Gastrocnemius medialis (tissue), 4 donors: ENCODE measurements at regions of chr11 and their contacts with region 1.

Region 1: GRCh38 chr11:60363542-60364510 is 14.5 kb upstream of the MS4A7 start:
- DNase-seq: peak; percentile 11 to 18
- ATAC-seq: peak in 1 of 2 donors; percentile 51
- H3K4me3 ChIP-seq: no peak overlapping the region
- H3K27ac ChIP-seq: no peak overlapping the region
- H3K4me1 ChIP-seq: no peaks in the 10 kb centered on the region
- H3K27me3 ChIP-seq: no peaks in the 10 kb centered on the region
- CTCF ChIP-seq: peak in 2 of 5 experiments; percentile 50 to 57
- POLR2A ChIP-seq: no peak

Region 2: DNA sequence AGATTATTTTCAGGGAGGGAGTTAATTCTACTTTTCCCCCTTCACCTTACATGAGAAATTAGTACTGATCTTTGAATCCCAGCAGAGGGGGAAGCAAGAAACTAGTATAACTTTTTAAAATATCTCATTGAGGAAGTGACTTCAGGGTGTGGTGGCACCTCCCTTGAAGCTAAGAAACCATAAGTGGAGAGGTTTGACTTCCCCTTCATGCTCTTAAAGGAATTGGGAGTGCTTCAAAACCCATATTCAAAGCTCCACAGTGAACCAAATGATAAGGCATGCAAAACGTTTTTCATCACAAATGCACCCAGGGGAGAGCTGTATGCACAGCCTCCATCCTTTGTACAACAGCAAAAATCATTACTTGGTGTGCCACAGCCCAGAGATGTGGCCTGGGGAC is 33.0 kb after region 1 on chr11:
- in situ Hi-C with region 1: no loop called
- intact Hi-C with region 1: no loop called
- DNase-seq: no peak
- ATAC-seq: no peak
- H3K4me3 ChIP-seq: no peak overlapping the region
- H3K27ac ChIP-seq: no peak overlapping the region
- H3K4me1 ChIP-seq: no peaks in the 10 kb centered on the region
- H3K27me3 ChIP-seq: no peaks in the 10 kb centered on the region
- CTCF ChIP-seq: no peak
- POLR2A ChIP-seq: no peak

Region 3: DNA sequence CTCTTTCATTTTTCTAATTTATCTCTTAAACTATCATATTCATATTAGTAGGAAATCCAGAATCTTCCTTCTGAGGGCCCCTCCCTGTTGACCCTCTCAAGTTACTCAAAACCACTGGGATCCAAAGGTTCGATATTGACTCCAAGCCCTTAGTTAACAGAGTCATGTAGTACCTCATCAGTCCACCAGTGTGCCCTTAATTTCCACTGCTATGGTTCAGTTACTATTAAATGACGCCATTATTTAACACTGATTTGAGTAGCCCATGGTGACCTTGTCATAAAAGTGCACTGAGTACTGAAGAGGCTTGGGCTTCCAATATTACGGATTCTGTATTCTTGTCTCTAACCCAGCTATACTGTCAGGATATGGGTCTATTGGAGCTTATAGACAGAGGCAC is 243.7 kb after region 1 on chr11:
- in situ Hi-C with region 1: loop called in 1 of 4 experiments (anchors 25 kb)
- intact Hi-C with region 1: loop called (anchors 10 kb)
- DNase-seq: no peak
- ATAC-seq: no peak
- H3K4me3 ChIP-seq: no peak overlapping the region
- H3K27ac ChIP-seq: no peak overlapping the region
- H3K4me1 ChIP-seq: no peaks in the 10 kb centered on the region
- H3K27me3 ChIP-seq: no peaks in the 10 kb centered on the region
- CTCF ChIP-seq: no peak
- POLR2A ChIP-seq: no peak

Region 4: DNA sequence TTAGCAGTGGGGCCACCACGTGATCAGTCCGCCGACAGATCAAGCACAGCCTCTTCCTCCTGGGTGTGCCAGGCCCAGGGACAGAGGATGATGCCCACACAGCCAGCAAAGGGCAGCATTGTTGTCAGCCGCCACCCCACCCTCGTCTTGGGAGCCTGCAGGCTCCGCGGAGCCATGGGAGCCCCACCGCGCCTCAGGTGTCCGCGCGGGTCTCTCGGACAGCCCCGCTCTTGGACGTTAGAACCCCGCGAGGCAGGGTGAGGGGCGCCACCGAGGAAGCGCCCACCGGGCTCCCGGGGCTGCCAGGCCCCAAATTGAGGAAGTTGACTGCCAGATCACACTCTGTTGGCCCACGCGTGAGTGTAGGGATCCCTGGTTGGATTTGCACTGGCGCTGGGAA is 251.7 kb after region 1 on chr11:
- in situ Hi-C with region 1: loop called in 1 of 4 experiments (anchors 25 kb)
- intact Hi-C with region 1: loop called (anchors 10 kb)
- DNase-seq: no peak
- ATAC-seq: no peak
- H3K4me3 ChIP-seq: no peak overlapping the region
- H3K27ac ChIP-seq: no peak overlapping the region
- H3K4me1 ChIP-seq: no peaks in the 10 kb centered on the region
- H3K27me3 ChIP-seq: no peaks in the 10 kb centered on the region
- CTCF ChIP-seq: no peak
- POLR2A ChIP-seq: no peak